ENCODE measurements at regions of chr15 and their contacts with region 1.

Region 1: GRCh38 chr15:39874890-39875549 is 45.0 kb downstream of the GPR176 start:
- DNase-seq: peak in 3 of 5 donors; percentile 9 to 21 (median 11)
- H3K4me3 ChIP-seq: no peak overlapping the region
- H3K4me3 Mint-ChIP-seq: no peak overlapping the region
- H3K27ac ChIP-seq: no peak overlapping the region
- H3K27ac Mint-ChIP-seq: no peak overlapping the region
- H3K4me1 ChIP-seq: no peaks in the 10 kb centered on the region
- H3K4me1 Mint-ChIP-seq: peaks cover 0 to 3% (median 0%) of the 10 kb centered on the region in 4 donors
- H3K27me3 ChIP-seq: no peaks in the 10 kb centered on the region
- H3K27me3 Mint-ChIP-seq: peaks cover 2 to 5% of the 10 kb centered on the region in 2 donors

Region 2: DNA sequence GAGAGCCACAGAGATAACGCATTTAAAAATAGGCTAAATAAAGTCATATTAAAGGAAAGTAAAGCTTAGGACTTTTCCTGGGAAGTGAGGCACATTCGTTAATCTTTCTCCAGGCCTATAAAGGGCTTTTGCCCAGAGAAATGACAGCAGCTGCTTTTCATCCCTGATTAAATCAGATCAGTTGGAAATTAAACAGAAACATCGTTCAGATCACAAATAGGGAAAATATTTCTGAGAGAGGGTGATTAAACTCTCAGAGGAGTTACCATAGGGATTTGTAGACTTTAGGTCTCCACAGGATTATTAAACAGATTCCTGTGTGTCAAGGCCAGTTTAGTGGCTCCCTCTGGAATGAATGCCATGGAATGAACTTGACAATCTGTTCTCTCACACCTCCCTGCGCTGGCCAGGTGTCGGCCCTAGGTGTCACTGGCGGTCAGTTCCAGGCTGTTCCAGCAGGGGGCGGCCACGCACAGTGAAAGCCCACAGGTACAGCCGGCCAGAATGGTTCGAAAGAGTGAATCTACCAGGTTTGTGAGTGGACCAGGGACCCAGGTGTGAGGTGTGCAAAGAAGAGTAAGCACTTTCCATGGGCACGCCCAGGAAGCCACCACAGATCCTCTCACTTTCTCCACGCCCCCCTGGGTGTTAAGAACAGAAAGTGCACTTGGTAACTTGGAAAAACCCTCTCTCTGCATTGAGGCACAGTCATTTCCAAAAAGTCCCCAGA is 1057.4 kb before region 1 on chr15:
- CTCF ChIA-PET with region 1: no interaction called
- POLR2A ChIA-PET with region 1: no interaction called
- intact Hi-C with region 1: loop called (anchors 5 kb)
- DNase-seq: peak; percentile 69 to 78 (median 73)
- H3K4me3 ChIP-seq: no peak overlapping the region
- H3K4me3 Mint-ChIP-seq: peak overlapping the region in 4 of 8 donors; percentile 17 to 52 (median 20)
- H3K27ac ChIP-seq: no peak overlapping the region
- H3K27ac Mint-ChIP-seq: no peak overlapping the region
- H3K4me1 ChIP-seq: no peaks in the 10 kb centered on the region
- H3K4me1 Mint-ChIP-seq: peaks cover 0 to 5% (median 2%) of the 10 kb centered on the region in 4 donors
- H3K27me3 ChIP-seq: no peaks in the 10 kb centered on the region
- H3K27me3 Mint-ChIP-seq: peaks cover 0 to 2% of the 10 kb centered on the region in 2 donors

Region 3: DNA sequence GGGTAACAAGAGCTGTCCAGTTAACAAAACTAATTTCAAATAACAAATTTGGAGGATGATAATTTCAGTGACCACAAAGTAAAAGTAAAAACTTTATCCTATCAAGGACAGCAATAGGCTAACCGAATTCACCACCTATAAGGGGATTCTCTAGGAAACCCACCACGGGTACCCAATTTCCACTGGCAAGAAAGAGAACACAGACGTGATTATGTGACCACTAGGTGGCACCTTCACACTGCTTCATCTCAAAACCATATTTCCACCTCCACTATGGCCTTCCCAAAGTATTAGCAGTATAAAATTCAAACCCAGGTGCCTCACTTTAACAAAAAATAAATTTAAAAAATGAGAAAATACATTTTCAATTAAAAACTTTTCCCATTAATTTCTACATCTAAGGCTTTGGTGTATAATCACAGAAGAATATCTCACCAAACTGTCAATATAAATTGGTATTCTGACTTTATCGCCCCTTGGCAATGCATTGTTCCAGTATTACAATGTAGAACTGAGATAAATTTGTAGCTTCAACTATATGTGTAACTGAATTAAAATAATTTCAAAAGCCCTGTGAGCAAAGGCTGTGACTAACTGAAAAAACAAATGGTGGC is 188.9 kb before region 1 on chr15:
- CTCF ChIA-PET with region 1: interaction called, 13 read pairs
- POLR2A ChIA-PET with region 1: no interaction called
- intact Hi-C with region 1: no loop called
- DNase-seq: peak in 4 of 5 donors; percentile 28 to 36 (median 31)
- H3K4me3 ChIP-seq: no peak overlapping the region
- H3K4me3 Mint-ChIP-seq: no peak overlapping the region
- H3K27ac ChIP-seq: no peak overlapping the region
- H3K27ac Mint-ChIP-seq: no peak overlapping the region
- H3K4me1 ChIP-seq: no peaks in the 10 kb centered on the region
- H3K4me1 Mint-ChIP-seq: peaks cover 0 to 15% (median 4%) of the 10 kb centered on the region in 4 donors
- H3K27me3 ChIP-seq: no peaks in the 10 kb centered on the region
- H3K27me3 Mint-ChIP-seq: peaks cover 0 to 1% of the 10 kb centered on the region in 2 donors

Region 4: GRCh38 chr15:39804026-39804425 is 71.0 kb before region 1 on chr15:
- CTCF ChIA-PET with region 1: no interaction called
- POLR2A ChIA-PET with region 1: no interaction called
- intact Hi-C with region 1: no loop called
- DNase-seq: no peak
- H3K4me3 ChIP-seq: no peak overlapping the region
- H3K4me3 Mint-ChIP-seq: no peak overlapping the region
- H3K27ac ChIP-seq: no peak overlapping the region
- H3K27ac Mint-ChIP-seq: no peak overlapping the region
- H3K4me1 ChIP-seq: no peaks in the 10 kb centered on the region
- H3K4me1 Mint-ChIP-seq: no peaks in the 10 kb centered on the region
- H3K27me3 ChIP-seq: peaks cover 8% of the 10 kb centered on the region
- H3K27me3 Mint-ChIP-seq: peaks cover 16 to 34% of the 10 kb centered on the region in 2 donors

Measured in CD4-positive, alpha-beta memory T cell (primary cell).